ENCODE measurements at regions of chr5 and their contacts with region 1.

Region 1: DNA sequence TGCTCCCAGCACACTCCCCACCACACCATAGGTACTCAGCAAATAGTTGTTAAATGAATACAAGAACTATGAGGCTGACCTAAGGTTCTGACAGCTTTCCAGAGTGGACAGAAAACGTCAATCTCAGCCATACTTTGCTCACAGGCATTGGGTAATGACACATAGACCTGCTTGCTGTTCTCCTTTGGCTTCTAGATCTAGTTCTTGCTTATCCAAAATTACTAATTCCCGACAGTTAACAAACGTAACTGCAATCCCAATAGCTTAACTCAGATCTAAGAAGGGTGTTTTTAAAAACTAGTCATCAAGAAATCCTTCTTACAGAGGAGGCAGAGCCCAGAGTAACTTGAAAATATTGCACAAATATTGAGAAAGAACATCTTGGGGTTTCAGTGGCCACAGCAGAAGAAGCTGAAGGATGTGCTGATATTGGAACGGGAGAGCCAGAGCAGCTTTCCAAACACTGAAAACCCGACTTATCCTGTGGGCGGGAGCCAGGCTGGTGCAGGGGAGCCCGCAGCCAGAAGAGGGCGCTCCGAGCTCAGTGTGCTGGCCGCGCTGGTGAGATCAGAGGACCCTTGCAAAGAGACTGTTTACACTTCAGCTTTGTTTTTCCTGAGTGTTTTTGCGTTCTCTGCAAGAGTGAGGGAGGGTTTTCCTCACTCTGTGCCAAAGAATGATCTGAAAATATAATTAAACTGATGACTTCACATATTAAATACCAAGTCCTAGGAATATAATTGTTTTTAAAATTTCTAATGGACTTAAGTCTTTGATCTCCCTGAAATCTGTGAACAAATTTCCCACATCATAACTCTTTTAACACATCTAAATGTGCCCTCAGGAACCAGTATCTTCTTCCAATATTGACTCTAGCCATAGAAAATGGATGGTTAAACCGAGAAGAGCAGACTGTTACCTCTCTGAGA is 30.3 kb downstream of the FGF1 start:
- DNase-seq: peak; percentile 73 to 87
- H3K4me3 ChIP-seq: no peak overlapping the region
- H3K4me3 Mint-ChIP-seq: no peak overlapping the region
- H3K27ac Mint-ChIP-seq: no peak overlapping the region
- H3K4me1 ChIP-seq: no peaks in the 10 kb centered on the region
- H3K4me1 Mint-ChIP-seq: no peaks in the 10 kb centered on the region
- H3K27me3 ChIP-seq: no peaks in the 10 kb centered on the region
- H3K27me3 Mint-ChIP-seq: peaks cover 8% of the 10 kb centered on the region
- CTCF ChIP-seq: peak; percentile 91 to 99

Region 2: GRCh38 chr5:142611154-142611553 is 44.4 kb before region 1 on chr5:
- CTCF ChIA-PET with region 1: interaction called, 10 read pairs
- POLR2A ChIA-PET with region 1: no interaction called
- intact Hi-C with region 1: loop called (anchors 1 kb)
- DNase-seq: peak; percentile 73 to 78
- H3K4me3 ChIP-seq: no peak overlapping the region
- H3K4me3 Mint-ChIP-seq: no peak overlapping the region
- H3K27ac Mint-ChIP-seq: no peak overlapping the region
- H3K4me1 ChIP-seq: no peaks in the 10 kb centered on the region
- H3K4me1 Mint-ChIP-seq: no peaks in the 10 kb centered on the region
- H3K27me3 ChIP-seq: no peaks in the 10 kb centered on the region
- H3K27me3 Mint-ChIP-seq: peaks cover 12% of the 10 kb centered on the region
- CTCF ChIP-seq: peak; percentile 85 to 94

Region 3: GRCh38 chr5:142699184-142699720 is 43.6 kb after region 1 on chr5:
- CTCF ChIA-PET with region 1: interaction called, 76 read pairs
- POLR2A ChIA-PET with region 1: no interaction called
- intact Hi-C with region 1: loop called (anchors 1 kb)
- DNase-seq: peak; percentile 84 to 90
- H3K4me3 ChIP-seq: no peak overlapping the region
- H3K4me3 Mint-ChIP-seq: no peak overlapping the region
- H3K27ac Mint-ChIP-seq: no peak overlapping the region
- H3K4me1 ChIP-seq: no peaks in the 10 kb centered on the region
- H3K4me1 Mint-ChIP-seq: no peaks in the 10 kb centered on the region
- H3K27me3 ChIP-seq: no peaks in the 10 kb centered on the region; the same call in none of the 2 replicates
- H3K27me3 Mint-ChIP-seq: peaks cover 7% of the 10 kb centered on the region
- CTCF ChIP-seq: peak; percentile 93 to 97

Region 4: GRCh38 chr5:142758056-142758795 is 102.6 kb after region 1 on chr5:
- CTCF ChIA-PET with region 1: no interaction called
- POLR2A ChIA-PET with region 1: no interaction called
- intact Hi-C with region 1: no loop called
- DNase-seq: no peak
- H3K4me3 ChIP-seq: no peak overlapping the region
- H3K4me3 Mint-ChIP-seq: no peak overlapping the region
- H3K27ac Mint-ChIP-seq: no peak overlapping the region
- H3K4me1 ChIP-seq: no peaks in the 10 kb centered on the region
- H3K4me1 Mint-ChIP-seq: peaks cover 3% of the 10 kb centered on the region
- H3K27me3 ChIP-seq: no peaks in the 10 kb centered on the region
- H3K27me3 Mint-ChIP-seq: no peaks in the 10 kb centered on the region
- CTCF ChIP-seq: no peak

Region 5: DNA sequence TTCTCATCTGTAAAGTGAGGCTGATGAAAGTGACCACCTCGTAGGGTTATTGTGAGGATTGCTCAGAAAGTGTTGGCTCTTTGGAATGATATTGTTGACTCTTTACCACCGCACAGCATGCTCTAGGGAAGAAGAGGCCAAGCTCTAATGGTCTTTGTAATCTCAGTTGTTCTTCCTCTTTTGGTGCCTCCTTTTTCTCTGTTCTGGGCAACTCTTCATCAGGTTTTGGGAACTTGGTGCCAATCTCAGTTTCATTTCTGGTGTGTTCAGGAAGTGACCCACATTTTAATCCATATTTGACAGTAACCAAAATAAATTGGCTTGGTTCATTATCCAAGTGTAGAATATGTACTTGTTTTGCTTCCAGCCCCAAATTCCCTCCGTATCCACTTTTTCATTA is 139.6 kb after region 1 on chr5:
- CTCF ChIA-PET with region 1: no interaction called
- POLR2A ChIA-PET with region 1: no interaction called
- intact Hi-C with region 1: no loop called
- DNase-seq: no peak
- H3K4me3 ChIP-seq: no peak overlapping the region
- H3K4me3 Mint-ChIP-seq: peak overlapping the region; percentile 60
- H3K27ac Mint-ChIP-seq: peak overlapping the region; percentile 67
- H3K4me1 ChIP-seq: peaks cover 59% of the 10 kb centered on the region
- H3K4me1 Mint-ChIP-seq: peaks cover 49% of the 10 kb centered on the region
- H3K27me3 ChIP-seq: no peaks in the 10 kb centered on the region
- H3K27me3 Mint-ChIP-seq: no peaks in the 10 kb centered on the region
- CTCF ChIP-seq: no peak

Region 6: DNA sequence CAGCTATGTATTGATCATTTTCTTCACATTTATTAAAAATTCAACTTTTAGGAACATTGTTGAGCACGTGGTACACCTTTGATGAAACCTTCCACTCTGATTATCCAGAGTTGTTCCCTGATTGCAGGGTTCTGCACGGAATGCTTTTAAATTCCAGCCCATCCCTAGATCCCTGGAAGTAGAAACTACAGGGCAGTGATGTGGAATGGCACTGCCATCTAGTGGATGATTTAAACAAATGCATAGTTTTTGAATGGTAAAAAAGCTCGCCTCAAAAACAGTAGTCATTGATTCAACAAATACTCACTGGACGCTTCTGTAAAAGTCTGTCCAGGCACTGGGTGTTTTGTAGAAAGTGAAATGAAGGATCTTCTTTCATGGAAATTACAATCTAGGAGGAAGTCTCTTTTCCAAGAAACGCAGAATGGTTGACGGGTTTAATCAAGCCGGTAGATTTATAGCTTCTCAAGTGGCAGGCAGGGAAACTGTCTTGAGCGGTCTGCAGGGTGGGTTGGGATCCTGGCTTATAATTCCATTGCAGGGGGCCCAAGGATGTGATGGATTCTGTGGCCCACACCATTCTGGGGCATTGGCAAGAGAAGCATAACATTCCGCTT is 233.0 kb after region 1 on chr5:
- CTCF ChIA-PET with region 1: interaction called, 9 read pairs
- POLR2A ChIA-PET with region 1: no interaction called
- intact Hi-C with region 1: loop called (anchors 5 kb)
- DNase-seq: peak; percentile 54 to 59
- H3K4me3 ChIP-seq: no peak overlapping the region
- H3K4me3 Mint-ChIP-seq: no peak overlapping the region
- H3K27ac Mint-ChIP-seq: no peak overlapping the region
- H3K4me1 ChIP-seq: peaks cover 17% of the 10 kb centered on the region
- H3K4me1 Mint-ChIP-seq: peaks cover 7% of the 10 kb centered on the region
- H3K27me3 ChIP-seq: no peaks in the 10 kb centered on the region
- H3K27me3 Mint-ChIP-seq: no peaks in the 10 kb centered on the region
- CTCF ChIP-seq: peak; percentile 68 to 69